ENCODE measurements at regions of chr22 and their contacts with region 1.

Region 1: DNA sequence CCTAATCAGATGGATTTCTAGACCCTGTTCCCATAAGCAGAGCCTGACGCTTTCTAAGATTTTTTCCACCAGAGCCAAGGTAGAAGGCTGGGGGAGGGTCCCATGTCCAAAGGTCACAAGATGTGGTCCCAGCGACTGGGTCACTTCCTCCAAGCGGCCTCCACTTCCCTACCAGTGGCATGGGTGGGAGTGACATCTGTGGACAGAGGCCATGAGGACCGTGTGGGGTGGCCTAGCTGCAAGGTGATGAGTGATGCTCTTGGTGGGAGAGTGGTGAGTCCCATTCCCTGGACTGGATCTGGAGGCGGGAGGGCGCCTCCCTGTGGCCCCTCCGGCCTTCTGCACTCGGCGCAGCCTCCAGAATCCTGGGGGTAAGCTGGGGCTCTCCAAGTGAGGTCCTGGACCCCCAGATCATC is 32.4 kb upstream of the PRR5 start:
- DNase-seq: peak; percentile 41
- ATAC-seq: no peak
- H3K4me3 Mint-ChIP-seq: peak overlapping the region; percentile 78
- H3K27ac Mint-ChIP-seq: peak overlapping the region; percentile 81
- H3K4me1 Mint-ChIP-seq: peaks cover 75% of the 10 kb centered on the region
- H3K27me3 Mint-ChIP-seq: no peaks in the 10 kb centered on the region

Region 2: GRCh38 chr22:44625981-44626687 is 43.4 kb before region 1 on chr22:
- CTCF ChIA-PET with region 1: interaction called, 14 read pairs
- POLR2A ChIA-PET with region 1: no interaction called
- DNase-seq: peak; percentile 88
- ATAC-seq: peak; percentile 66
- H3K4me3 Mint-ChIP-seq: no peak overlapping the region
- H3K27ac Mint-ChIP-seq: peak overlapping the region; percentile 16
- H3K4me1 Mint-ChIP-seq: peaks cover 7% of the 10 kb centered on the region
- H3K27me3 Mint-ChIP-seq: peaks cover 4% of the 10 kb centered on the region

Region 3: GRCh38 chr22:44701824-44702478 is 32.4 kb after region 1 on chr22 and contains the start of gene PRR5:
- CTCF ChIA-PET with region 1: no interaction called
- POLR2A ChIA-PET with region 1: no interaction called
- DNase-seq: peak; percentile 91
- ATAC-seq: peak; percentile 90
- H3K4me3 Mint-ChIP-seq: peak within 1 kb of the TSS; percentile 69
- H3K27ac Mint-ChIP-seq: peak within 1 kb of the TSS; percentile 83
- H3K4me1 Mint-ChIP-seq: peaks cover 32% of the 10 kb centered on the region
- H3K27me3 Mint-ChIP-seq: no peaks in the 10 kb centered on the region
- total RNA-seq, gene PRR5: 29.4 to 31.5 TPM

Measured in activated CD8-positive, alpha-beta T cell treated with anti-CD3 and anti-CD28 coated beads, Interleukin-2, amount 10 ng/mL, durations not matched to agents 7 days and 5 days (primary cell).